ENCODE measurements at regions of chr10 and their contacts with region 1.

Region 1: GRCh38 chr10:60387531-60387930 is 2.1 kb downstream of the ANK3 start:
- DNase-seq: no peak
- ATAC-seq: no peak
- H3K4me3 Mint-ChIP-seq: no peak overlapping the region
- H3K27ac Mint-ChIP-seq: no peak overlapping the region
- H3K4me1 Mint-ChIP-seq: peaks cover 29% of the 10 kb centered on the region
- H3K27me3 Mint-ChIP-seq: no peaks in the 10 kb centered on the region
- CTCF ChIP-seq: no peak

Region 2: DNA sequence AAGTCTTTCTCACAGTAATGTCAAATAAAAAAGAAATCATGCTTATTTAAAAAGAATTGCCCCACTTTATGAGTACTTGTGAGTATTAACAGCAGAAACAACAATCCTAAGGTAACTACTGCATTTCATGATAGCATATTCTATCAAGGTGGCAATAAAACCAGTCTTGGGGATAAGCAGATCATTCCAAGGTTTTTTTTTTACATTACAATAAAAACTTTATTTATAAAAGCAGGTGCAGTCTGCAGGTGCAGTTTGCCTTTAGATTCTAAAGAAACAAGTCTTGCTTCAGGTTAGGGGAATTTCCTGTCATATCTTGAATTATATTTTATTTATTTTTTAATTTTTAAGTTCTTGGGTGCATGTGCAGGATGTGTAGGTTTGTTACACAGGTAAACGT is 12.8 kb after region 1 on chr10:
- CTCF ChIA-PET with region 1: no interaction called
- POLR2A ChIA-PET with region 1: interaction called, 3 read pairs
- intact Hi-C with region 1: loop called (anchors 2 kb)
- DNase-seq: no peak
- ATAC-seq: no peak
- H3K4me3 Mint-ChIP-seq: no peak overlapping the region
- H3K27ac Mint-ChIP-seq: no peak overlapping the region
- H3K4me1 Mint-ChIP-seq: no peaks in the 10 kb centered on the region
- H3K27me3 Mint-ChIP-seq: no peaks in the 10 kb centered on the region
- CTCF ChIP-seq: no peak

Region 3: DNA sequence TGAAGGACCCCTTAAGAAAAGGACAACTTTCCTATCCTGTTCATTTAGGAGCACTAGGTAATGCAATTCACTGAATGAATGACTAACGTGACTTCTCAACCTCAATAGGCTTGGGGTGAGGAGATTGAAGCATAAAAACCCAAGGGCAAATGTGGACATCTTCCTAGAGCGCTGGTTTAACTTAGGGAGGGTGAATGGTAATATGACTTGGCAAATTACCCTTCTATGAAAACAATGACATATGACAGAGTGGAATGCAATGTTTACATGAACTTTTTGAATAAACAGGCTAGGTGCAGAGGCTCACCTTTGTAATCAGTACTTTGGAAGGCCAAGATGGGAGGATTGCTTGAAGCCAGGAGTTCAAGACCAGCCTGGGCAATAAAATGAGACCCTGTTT is 86.0 kb after region 1 on chr10:
- CTCF ChIA-PET with region 1: no interaction called
- POLR2A ChIA-PET with region 1: no interaction called
- intact Hi-C with region 1: no loop called
- DNase-seq: no peak
- ATAC-seq: no peak
- H3K4me3 Mint-ChIP-seq: no peak overlapping the region
- H3K27ac Mint-ChIP-seq: no peak overlapping the region
- H3K4me1 Mint-ChIP-seq: no peaks in the 10 kb centered on the region
- H3K27me3 Mint-ChIP-seq: peaks cover 4% of the 10 kb centered on the region
- CTCF ChIP-seq: no peak

Measured in activated B cell treated with CpG ODN at 0.5 μM for 24 hours (primary cell).